OCI-LY7 (cell line): ENCODE measurements at regions of chr20 and their contacts with region 1.

Region 1: DNA sequence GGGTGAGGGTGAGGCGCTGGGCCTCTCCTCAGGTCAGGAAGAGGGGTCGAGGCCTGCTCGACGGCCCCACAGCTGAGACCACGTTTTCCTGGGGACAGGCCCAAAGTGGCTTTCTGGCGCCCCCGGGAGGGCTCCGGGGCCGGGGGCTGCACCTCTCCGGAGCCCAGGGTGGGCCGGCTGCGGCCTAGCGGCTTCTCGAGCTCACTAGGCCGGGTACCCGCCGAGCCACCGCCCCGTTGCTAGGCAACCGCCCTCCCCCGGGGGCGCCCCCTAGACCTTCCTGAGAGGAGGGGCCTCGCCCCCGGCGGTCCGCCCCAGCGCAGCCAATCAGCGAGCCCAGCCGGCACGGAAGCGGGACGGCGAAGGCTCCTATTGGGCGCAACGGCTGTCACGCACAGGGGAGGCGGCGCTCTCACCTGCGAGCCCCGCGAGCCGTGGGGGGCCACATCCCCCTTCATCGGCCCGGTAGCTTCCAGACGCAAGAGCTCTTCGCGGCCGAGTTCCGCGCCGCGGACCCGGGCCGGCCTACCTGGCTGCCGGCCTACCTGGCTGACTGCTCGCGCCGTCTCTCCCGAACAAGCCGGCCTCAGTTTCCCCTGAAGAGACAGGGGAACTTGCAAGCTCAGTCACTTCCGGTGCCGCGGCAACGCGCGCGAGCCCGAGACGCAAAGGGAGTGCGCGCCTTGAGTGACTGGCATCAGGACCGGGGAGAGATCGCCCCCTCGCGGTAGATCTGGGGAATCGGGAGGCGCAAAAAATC is 831 bp upstream of the BCL2L1 start:
- DNase-seq: peak; percentile 99
- H3K4me3 ChIP-seq: peak overlapping the region; percentile 95
- H3K27ac ChIP-seq: peak overlapping the region; percentile 89
- H3K4me1 ChIP-seq: peaks cover 21% of the 10 kb centered on the region
- CTCF ChIP-seq: peak; percentile 93

Region 2: GRCh38 chr20:31572701-31573554 is 150.6 kb before region 1 on chr20:
- CTCF ChIA-PET with region 1: interaction called, 3 read pairs
- POLR2A ChIA-PET with region 1: no interaction called
- intact Hi-C with region 1: loop called (anchors 5 kb)
- DNase-seq: peak; percentile 92
- H3K4me3 ChIP-seq: peak overlapping the region; percentile 71
- H3K27ac ChIP-seq: peak overlapping the region; percentile 59
- H3K4me1 ChIP-seq: peaks cover 20% of the 10 kb centered on the region
- CTCF ChIP-seq: no peak

Region 3: DNA sequence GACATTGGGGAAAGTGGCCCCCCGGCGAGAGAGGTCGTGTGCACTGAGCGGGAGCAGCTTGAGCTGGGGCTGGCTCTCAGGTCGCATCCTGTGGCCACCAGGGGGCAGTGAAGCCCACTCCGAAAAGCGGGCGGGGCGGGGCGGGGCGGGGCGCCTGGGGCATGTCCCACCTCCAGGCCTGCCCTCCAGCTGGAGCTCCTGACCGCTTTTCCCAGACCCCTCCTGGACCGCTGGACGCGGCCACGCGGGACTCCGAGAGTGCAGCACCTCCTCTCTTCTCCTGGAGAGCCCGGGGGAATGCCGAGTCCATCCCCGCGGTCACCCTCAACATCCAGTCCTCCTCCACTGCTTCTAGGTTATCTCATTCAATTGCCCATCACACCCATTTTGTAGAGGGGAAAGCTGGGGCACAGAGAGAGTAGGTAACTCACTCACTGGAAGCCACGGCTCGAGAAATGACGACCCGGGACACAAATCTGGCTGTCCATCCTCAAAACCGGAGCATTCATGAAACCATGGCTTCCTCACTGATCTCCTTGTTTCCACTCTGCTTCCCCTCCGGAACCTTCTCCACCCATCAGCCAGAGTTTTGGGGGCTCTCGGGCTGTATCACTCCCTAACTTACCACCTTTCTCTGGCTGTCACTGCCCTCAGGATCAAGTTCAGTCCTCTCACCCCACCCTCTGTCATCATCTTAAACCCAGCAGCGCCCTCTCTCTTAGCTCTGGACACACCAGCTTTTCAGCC is 61.7 kb before region 1 on chr20:
- CTCF ChIA-PET with region 1: interaction called, 66 read pairs
- POLR2A ChIA-PET with region 1: interaction called, 79 read pairs
- intact Hi-C with region 1: loop called (anchors 1 kb)
- DNase-seq: peak; percentile 83
- H3K4me3 ChIP-seq: peak overlapping the region; percentile 53
- H3K27ac ChIP-seq: peak overlapping the region; percentile 64
- H3K4me1 ChIP-seq: peaks cover 37% of the 10 kb centered on the region
- CTCF ChIP-seq: peak; percentile 74

Region 4: GRCh38 chr20:31684153-31685015 is 39.1 kb before region 1 on chr20:
- CTCF ChIA-PET with region 1: interaction called, 12 read pairs
- POLR2A ChIA-PET with region 1: interaction called, 52 read pairs
- intact Hi-C with region 1: loop called (anchors 1 kb)
- DNase-seq: peak; percentile 95
- H3K4me3 ChIP-seq: peak overlapping the region; percentile 49
- H3K27ac ChIP-seq: peak overlapping the region; percentile 100
- H3K4me1 ChIP-seq: peaks cover 95% of the 10 kb centered on the region
- CTCF ChIP-seq: no peak

Region 5: GRCh38 chr20:31704225-31705119 is 19.0 kb before region 1 on chr20:
- CTCF ChIA-PET with region 1: interaction called, 10 read pairs
- POLR2A ChIA-PET with region 1: interaction called, 25 read pairs
- intact Hi-C with region 1: loop called (anchors 1 kb)
- DNase-seq: no peak
- H3K4me3 ChIP-seq: peak overlapping the region; percentile 2
- H3K27ac ChIP-seq: peak overlapping the region; percentile 98
- H3K4me1 ChIP-seq: peaks cover 71% of the 10 kb centered on the region
- CTCF ChIP-seq: no peak